CD8-positive, alpha-beta T cell (primary cell): ENCODE measurements at regions of chr6 and their contacts with region 1.

Region 1: DNA sequence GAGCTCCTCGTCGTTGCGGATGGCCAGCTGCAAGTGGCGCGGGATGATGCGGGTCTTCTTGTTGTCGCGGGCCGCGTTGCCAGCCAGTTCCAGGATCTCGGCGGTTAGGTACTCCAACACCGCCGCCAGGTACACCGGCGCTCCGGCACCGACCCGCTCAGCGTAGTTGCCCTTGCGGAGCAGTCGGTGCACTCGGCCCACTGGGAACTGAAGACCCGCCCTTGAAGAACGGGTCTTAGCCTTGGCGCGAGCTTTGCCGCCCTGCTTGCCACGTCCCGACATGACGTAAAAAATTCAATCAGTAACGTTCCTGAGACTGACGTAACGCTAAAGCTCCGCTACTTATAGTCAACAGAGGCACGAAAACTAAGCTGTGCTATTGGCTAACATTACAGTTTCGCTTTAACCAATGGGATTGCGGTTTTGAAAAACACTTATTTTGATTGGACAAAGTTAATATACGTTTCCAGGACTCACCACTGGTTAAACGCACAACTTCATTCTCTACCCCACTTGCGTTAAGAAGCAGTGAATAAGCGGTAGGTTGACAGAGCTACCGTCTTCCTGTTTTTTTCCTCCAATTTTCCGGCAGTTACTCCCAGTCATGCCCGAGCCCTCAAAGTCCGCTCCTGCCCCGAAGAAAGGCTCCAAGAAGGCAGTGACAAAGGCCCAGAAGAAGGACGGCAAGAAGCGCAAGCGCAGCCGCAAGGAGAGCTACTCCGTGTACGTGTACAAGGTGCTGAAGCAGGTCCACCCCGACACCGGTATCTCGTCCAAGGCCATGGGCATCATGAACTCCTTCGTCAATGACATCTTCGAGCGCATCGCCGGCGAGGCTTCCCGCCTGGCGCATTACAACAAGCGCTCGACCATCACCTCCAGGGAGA is 73.9 kb downstream of the OR2B2 start:
- DNase-seq: peak; percentile 61 to 98 (median 74)
- ATAC-seq: peak; percentile 70
- H3K4me3 ChIP-seq: peak overlapping the region; percentile 64 to 76
- H3K4me3 Mint-ChIP-seq: no peak overlapping the region
- H3K27ac ChIP-seq: peak overlapping the region; percentile 91 to 98
- H3K27ac Mint-ChIP-seq: no peak overlapping the region
- H3K4me1 ChIP-seq: peaks cover 35% of the 10 kb centered on the region
- H3K4me1 Mint-ChIP-seq: peaks cover 21% of the 10 kb centered on the region
- H3K27me3 ChIP-seq: peaks cover 0 to 4% of the 10 kb centered on the region in 2 experiments
- H3K27me3 Mint-ChIP-seq: peaks cover 7% of the 10 kb centered on the region
- CTCF ChIP-seq: no peak

Region 2: DNA sequence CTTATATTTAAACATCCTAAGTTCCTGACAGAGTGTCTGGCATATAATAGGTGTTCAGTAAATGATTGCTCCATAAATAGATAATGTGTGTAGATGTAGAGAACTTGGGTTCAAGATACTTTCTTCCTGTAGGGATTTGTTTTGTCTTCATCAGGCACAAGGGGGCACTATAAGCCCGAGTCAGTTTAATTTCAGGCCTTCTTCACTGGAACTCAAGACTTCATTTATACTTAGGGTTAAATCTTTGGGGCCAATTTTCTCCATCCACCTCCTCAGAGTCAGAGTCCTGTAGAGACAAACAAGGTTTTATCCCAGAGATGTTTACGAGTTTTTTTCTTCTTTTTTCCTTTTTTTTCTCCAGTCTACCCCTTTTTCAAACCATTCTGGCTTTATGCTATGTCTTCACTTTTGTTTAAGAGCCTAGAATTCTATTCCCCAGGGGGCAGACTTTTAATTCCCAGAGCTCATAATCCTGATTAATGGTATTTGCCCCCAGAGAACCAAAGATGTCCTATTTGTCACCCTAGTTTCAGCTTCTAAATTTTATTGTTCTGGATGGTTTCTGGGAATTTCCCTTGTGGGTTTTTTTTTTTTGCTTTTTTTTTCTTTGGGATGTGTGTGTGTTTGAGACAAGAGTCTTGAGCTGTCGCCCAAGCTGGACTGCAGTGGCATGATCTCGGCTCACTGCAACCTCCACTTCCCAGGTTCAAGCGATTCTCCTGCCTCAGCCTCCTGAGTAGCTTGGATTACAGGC is 1662.7 kb before region 1 on chr6:
- CTCF ChIA-PET with region 1: no interaction called
- POLR2A ChIA-PET with region 1: interaction called, 10 read pairs
- intact Hi-C with region 1: loop called in 1 of 2 experiments (anchors 5 kb)
- DNase-seq: peak in 7 of 9 experiments; percentile 33 to 87 (median 53)
- ATAC-seq: no peak
- H3K4me3 ChIP-seq: no peak overlapping the region
- H3K4me3 Mint-ChIP-seq: peak overlapping the region; percentile 3
- H3K27ac ChIP-seq: no peak overlapping the region
- H3K27ac Mint-ChIP-seq: peak overlapping the region; percentile 63
- H3K4me1 ChIP-seq: peaks cover 26% of the 10 kb centered on the region
- H3K4me1 Mint-ChIP-seq: peaks cover 39% of the 10 kb centered on the region
- H3K27me3 ChIP-seq: no peaks in the 10 kb centered on the region
- H3K27me3 Mint-ChIP-seq: no peaks in the 10 kb centered on the region
- CTCF ChIP-seq: peak; percentile 93

Region 3: DNA sequence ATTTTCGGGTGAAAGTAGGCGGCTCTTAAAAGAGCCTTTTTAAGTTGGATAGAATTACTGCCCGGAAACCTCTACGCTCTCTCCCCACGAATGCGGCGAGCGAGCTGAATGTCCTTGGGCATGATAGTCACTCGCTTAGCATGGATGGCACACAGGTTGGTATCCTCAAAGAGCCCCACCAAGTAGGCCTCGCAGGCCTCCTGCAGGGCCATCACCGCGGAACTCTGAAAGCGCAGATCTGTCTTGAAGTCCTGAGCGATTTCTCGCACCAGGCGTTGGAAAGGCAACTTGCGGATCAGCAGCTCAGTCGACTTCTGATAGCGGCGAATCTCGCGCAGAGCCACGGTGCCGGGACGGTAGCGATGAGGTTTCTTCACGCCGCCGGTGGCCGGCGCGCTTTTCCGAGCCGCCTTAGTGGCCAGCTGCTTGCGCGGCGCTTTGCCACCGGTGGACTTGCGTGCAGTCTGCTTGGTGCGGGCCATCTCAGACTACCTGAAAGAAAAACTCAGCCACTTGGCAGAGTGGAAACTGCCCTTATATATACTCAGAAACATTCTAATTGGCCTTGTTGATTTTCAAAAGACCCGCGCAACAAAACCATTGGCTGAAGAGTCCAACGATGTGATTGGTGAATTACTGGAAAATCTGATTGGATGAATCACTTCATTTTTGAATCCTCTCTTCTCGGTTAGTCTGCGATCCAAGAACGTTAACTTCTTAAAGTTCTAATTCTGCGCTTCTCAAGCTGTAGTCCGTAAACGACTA is 1567.2 kb before region 1 on chr6:
- CTCF ChIA-PET with region 1: interaction called, 4 read pairs
- POLR2A ChIA-PET with region 1: interaction called, 13 read pairs
- intact Hi-C with region 1: no loop called
- DNase-seq: peak; percentile 68 to 91 (median 80)
- ATAC-seq: peak; percentile 22
- H3K4me3 ChIP-seq: peak overlapping the region; percentile 65 to 67
- H3K4me3 Mint-ChIP-seq: no peak overlapping the region
- H3K27ac ChIP-seq: peak overlapping the region; percentile 73 to 92
- H3K27ac Mint-ChIP-seq: peak overlapping the region; percentile 73
- H3K4me1 ChIP-seq: peaks cover 22% of the 10 kb centered on the region
- H3K4me1 Mint-ChIP-seq: peaks cover 13% of the 10 kb centered on the region
- H3K27me3 ChIP-seq: no peaks in the 10 kb centered on the region
- H3K27me3 Mint-ChIP-seq: no peaks in the 10 kb centered on the region
- CTCF ChIP-seq: no peak

Region 4: DNA sequence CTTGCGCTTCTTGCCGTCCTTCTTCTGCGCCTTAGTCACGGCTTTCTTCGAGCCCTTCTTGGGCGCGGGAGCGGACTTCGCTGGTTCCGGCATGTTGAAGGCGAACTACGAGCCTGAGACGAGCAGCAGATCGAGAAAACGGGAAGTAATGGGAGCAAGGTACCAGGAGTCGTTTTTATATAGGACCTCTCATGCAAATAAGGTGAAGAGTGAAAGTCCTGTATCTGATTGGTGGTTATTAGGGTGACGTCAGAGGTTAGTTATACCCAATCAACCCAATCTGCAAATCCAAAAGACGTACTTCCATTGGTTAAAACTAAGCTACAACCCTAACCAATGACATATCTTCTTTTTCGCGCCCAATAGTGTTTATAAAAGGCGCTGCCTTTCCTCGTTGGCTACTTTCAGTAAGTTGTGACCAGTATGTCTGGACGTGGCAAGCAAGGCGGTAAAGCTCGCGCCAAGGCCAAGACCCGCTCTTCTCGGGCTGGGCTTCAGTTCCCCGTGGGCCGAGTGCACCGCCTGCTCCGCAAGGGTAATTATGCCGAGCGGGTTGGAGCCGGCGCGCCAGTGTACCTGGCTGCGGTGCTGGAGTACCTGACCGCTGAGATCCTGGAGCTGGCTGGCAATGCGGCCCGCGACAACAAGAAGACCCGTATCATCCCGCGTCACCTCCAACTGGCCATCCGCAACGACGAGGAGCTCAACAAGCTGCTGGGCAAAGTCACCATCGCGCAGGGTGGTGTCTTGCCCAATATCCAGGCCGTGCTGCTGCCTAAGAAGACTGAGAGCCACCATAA is 691.4 kb before region 1 on chr6:
- CTCF ChIA-PET with region 1: no interaction called
- POLR2A ChIA-PET with region 1: interaction called, 60 read pairs
- intact Hi-C with region 1: no loop called
- DNase-seq: peak; percentile 56 to 98 (median 74)
- ATAC-seq: peak; percentile 85
- H3K4me3 ChIP-seq: peak overlapping the region; percentile 71 to 77
- H3K4me3 Mint-ChIP-seq: no peak overlapping the region
- H3K27ac ChIP-seq: peak overlapping the region; percentile 84 to 91
- H3K27ac Mint-ChIP-seq: no peak overlapping the region
- H3K4me1 ChIP-seq: peaks cover 11% of the 10 kb centered on the region
- H3K4me1 Mint-ChIP-seq: peaks cover 13% of the 10 kb centered on the region
- H3K27me3 ChIP-seq: no peaks in the 10 kb centered on the region
- H3K27me3 Mint-ChIP-seq: no peaks in the 10 kb centered on the region
- CTCF ChIP-seq: no peak

Region 5: GRCh38 chr6:27479319-27480182 is 358.8 kb before region 1 on chr6:
- CTCF ChIA-PET with region 1: no interaction called
- POLR2A ChIA-PET with region 1: interaction called, 25 read pairs
- intact Hi-C with region 1: loop called in 1 of 2 experiments (anchors 10 kb)
- DNase-seq: peak; percentile 83 to 97 (median 87)
- ATAC-seq: peak; percentile 69
- H3K4me3 ChIP-seq: peak overlapping the region; percentile 79 to 96
- H3K4me3 Mint-ChIP-seq: no peak overlapping the region
- H3K27ac ChIP-seq: peak overlapping the region; percentile 96 to 99
- H3K27ac Mint-ChIP-seq: no peak overlapping the region
- H3K4me1 ChIP-seq: peaks cover 13% of the 10 kb centered on the region
- H3K4me1 Mint-ChIP-seq: peaks cover 9% of the 10 kb centered on the region
- H3K27me3 ChIP-seq: no peaks in the 10 kb centered on the region
- H3K27me3 Mint-ChIP-seq: no peaks in the 10 kb centered on the region
- CTCF ChIP-seq: no peak

Region 6: DNA sequence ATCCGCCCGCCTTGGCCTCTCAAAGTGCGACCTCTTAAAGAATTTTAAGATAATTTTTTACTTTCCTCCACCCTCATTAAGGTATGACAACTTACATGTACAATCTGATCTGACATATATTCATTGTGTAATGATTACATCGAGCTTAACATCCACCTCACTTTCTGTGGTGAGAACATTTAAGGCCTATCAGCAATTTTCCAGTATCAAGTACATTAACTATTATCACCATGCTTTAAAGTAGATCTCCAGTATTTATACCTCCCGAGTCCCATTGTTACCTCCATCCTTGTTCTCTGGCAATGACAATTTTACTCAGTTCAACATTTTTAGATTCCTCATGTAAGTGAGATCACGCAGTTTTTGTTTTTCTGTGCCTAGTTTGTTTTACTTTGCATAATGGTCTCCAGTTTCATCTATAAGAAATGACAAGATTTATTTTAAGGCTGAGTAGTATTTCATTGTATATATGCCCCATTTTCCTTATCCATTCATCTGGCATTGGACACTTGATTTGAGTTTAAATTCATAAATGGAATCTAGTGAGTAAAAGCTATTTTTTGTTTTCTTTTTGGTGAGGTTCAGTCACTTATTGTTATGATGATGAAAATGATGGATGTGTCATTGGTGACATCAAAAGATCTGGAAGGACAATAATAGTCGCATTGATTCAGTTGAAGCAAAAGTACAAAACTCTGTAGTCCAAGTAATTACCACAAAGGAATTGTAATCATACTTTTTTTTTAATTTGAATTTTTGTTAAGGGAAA is 13.1 kb before region 1 on chr6:
- CTCF ChIA-PET with region 1: interaction called, 20 read pairs
- POLR2A ChIA-PET with region 1: interaction called, 205 read pairs
- intact Hi-C with region 1: loop called (anchors 1 kb)
- DNase-seq: peak in 1 of 9 experiments; percentile 45
- ATAC-seq: peak; percentile 6
- H3K4me3 ChIP-seq: peak overlapping the region; percentile 55 to 76
- H3K4me3 Mint-ChIP-seq: peak overlapping the region; percentile 89
- H3K27ac ChIP-seq: peak overlapping the region; percentile 81 to 91
- H3K27ac Mint-ChIP-seq: peak overlapping the region; percentile 99
- H3K4me1 ChIP-seq: peaks cover 24% of the 10 kb centered on the region
- H3K4me1 Mint-ChIP-seq: peaks cover 32% of the 10 kb centered on the region
- H3K27me3 ChIP-seq: no peaks in the 10 kb centered on the region
- H3K27me3 Mint-ChIP-seq: no peaks in the 10 kb centered on the region
- CTCF ChIP-seq: no peak

Region 7: GRCh38 chr6:28080631-28081485 is 242.6 kb after region 1 on chr6:
- CTCF ChIA-PET with region 1: no interaction called
- POLR2A ChIA-PET with region 1: no interaction called
- intact Hi-C with region 1: loop called in 1 of 2 experiments (anchors 10 kb)
- DNase-seq: peak; percentile 86 to 96 (median 94)
- ATAC-seq: peak; percentile 74
- H3K4me3 ChIP-seq: peak overlapping the region; percentile 69 to 93
- H3K4me3 Mint-ChIP-seq: peak overlapping the region; percentile 98
- H3K27ac ChIP-seq: peak overlapping the region; percentile 91 to 96
- H3K27ac Mint-ChIP-seq: peak overlapping the region; percentile 99
- H3K4me1 ChIP-seq: peaks cover 13% of the 10 kb centered on the region
- H3K4me1 Mint-ChIP-seq: peaks cover 21% of the 10 kb centered on the region
- H3K27me3 ChIP-seq: no peaks in the 10 kb centered on the region
- H3K27me3 Mint-ChIP-seq: no peaks in the 10 kb centered on the region
- CTCF ChIP-seq: no peak

Region 8: GRCh38 chr6:28597217-28598005 is 759.1 kb after region 1 on chr6:
- CTCF ChIA-PET with region 1: no interaction called
- POLR2A ChIA-PET with region 1: no interaction called
- intact Hi-C with region 1: no loop called
- DNase-seq: peak in 1 of 9 experiments; percentile 40
- ATAC-seq: no peak
- H3K4me3 ChIP-seq: no peak overlapping the region
- H3K4me3 Mint-ChIP-seq: no peak overlapping the region
- H3K27ac ChIP-seq: no peak overlapping the region
- H3K27ac Mint-ChIP-seq: no peak overlapping the region
- H3K4me1 ChIP-seq: no peaks in the 10 kb centered on the region
- H3K4me1 Mint-ChIP-seq: no peaks in the 10 kb centered on the region
- H3K27me3 ChIP-seq: peaks cover 6% of the 10 kb centered on the region in 2 experiments
- H3K27me3 Mint-ChIP-seq: peaks cover 35% of the 10 kb centered on the region
- CTCF ChIP-seq: no peak